Activated CD8-positive, alpha-beta T cell treated with anti-CD3 and anti-CD28 coated beads for 36 hours (primary cell): ENCODE measurements at regions of chr1 and their contacts with region 1.

Region 1: DNA sequence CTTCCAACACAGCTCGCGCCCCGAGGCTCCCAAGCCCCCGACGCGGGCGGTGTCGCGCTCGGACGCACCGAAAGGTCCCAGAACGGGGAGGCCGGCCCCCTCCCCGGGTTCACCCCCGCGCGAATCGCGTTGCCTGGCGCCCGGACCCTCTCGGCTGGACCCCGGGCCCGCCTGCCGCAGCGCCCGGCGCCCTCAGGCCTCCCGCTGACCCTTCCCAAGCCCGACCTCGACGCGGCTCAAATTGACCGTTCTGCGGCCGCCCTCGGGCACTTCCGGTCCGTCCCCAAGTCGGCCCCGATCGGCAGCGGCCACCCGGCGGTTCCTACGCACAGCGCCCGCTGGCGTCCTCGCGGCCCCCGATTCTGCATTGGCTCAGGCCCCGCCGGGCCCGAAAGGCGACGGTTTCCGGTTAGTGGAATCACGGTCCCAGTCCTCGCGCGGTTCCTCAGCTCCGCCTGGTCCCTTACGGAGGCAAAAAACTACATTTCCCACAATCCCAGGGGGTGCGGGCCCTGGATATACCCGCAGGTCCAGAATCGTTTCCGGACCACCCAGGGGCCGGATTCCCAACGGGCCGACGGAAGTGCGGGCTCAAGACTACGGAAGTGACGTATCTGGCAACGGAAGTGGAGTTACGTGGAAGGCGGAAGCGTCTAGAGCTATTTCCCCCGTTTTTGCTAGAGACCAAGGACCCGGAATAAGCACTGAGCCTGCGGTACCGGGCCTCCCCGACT is at the start of gene AURKAIP1:
- DNase-seq: peak; percentile 99
- ATAC-seq: peak; percentile 91
- H3K4me3 Mint-ChIP-seq: peak within 1 kb of the TSS; percentile 86
- H3K27ac Mint-ChIP-seq: peak within 1 kb of the TSS; percentile 96
- H3K4me1 Mint-ChIP-seq: peaks cover 31% of the 10 kb centered on the region
- H3K27me3 Mint-ChIP-seq: no peaks in the 10 kb centered on the region
- CTCF ChIP-seq: no peak
- total RNA-seq, gene AURKAIP1: 127 TPM

Region 2: GRCh38 chr1:1206376-1207260 is 168.5 kb before region 1 on chr1 and contains the start of gene TNFRSF18:
- CTCF ChIA-PET with region 1: no interaction called
- POLR2A ChIA-PET with region 1: no interaction called
- intact Hi-C with region 1: no loop called
- DNase-seq: peak; percentile 70
- ATAC-seq: peak; percentile 11
- H3K4me3 Mint-ChIP-seq: peak within 1 kb of the TSS; percentile 79
- H3K27ac Mint-ChIP-seq: peak within 1 kb of the TSS; percentile 98
- H3K4me1 Mint-ChIP-seq: peaks cover 31% of the 10 kb centered on the region
- H3K27me3 Mint-ChIP-seq: no peaks in the 10 kb centered on the region
- CTCF ChIP-seq: no peak
- total RNA-seq, gene TNFRSF18: 126 to 135 TPM

Region 3: DNA sequence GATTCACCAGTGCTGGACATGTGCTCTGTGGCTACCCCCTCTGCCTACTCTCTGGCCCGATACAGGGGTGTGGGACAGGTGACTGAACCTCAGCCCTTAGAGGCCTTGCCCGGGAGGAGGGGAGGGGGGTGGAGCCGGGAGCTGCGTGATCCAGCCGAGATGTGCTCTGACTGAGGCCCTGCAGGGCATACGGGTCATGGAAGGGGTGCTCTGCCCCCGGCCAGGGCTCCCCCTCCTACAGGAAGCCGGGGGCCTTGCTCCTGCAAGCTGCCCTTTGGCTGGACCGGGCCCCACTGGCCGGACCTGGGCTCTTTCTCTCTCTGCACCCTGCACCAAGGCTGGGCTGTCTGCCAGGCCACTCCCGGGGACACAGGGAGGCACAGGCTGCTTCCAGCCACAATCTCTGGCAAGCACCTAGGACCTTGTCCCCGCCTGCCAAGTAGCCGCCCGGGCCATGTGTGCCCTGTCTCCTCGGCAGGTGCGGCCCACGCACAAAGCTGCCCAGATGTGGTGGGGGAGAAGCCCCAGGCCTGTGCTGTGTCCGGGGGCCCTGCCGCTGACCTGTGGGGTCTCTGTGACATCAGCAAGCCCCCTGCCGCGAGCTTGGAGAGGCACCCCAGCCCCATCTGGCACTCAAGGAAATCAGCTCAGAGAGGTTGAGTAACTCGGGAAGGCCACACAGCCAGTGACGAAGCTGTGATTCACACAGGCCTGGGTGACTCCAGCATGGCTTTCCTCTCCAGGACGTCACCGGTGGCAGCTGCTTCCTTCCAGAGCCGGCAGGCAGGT is 93.4 kb before region 1 on chr1:
- CTCF ChIA-PET with region 1: no interaction called
- POLR2A ChIA-PET with region 1: no interaction called
- intact Hi-C with region 1: no loop called
- DNase-seq: peak; percentile 40
- ATAC-seq: peak; percentile 52
- H3K4me3 Mint-ChIP-seq: no peak overlapping the region
- H3K27ac Mint-ChIP-seq: no peak overlapping the region
- H3K4me1 Mint-ChIP-seq: peaks cover 2% of the 10 kb centered on the region
- H3K27me3 Mint-ChIP-seq: no peaks in the 10 kb centered on the region
- CTCF ChIP-seq: no peak

Region 4: GRCh38 chr1:1344672-1345361 is 30.3 kb before region 1 on chr1:
- CTCF ChIA-PET with region 1: interaction called, 17 read pairs
- POLR2A ChIA-PET with region 1: interaction called, 5 read pairs
- intact Hi-C with region 1: no loop called
- DNase-seq: peak; percentile 73
- ATAC-seq: peak; percentile 50
- H3K4me3 Mint-ChIP-seq: no peak overlapping the region
- H3K27ac Mint-ChIP-seq: no peak overlapping the region
- H3K4me1 Mint-ChIP-seq: peaks cover 22% of the 10 kb centered on the region
- H3K27me3 Mint-ChIP-seq: no peaks in the 10 kb centered on the region
- CTCF ChIP-seq: no peak

Region 5: GRCh38 chr1:1351511-1352427 is 23.3 kb before region 1 on chr1:
- CTCF ChIA-PET with region 1: interaction called, 40 read pairs
- POLR2A ChIA-PET with region 1: interaction called, 6 read pairs
- intact Hi-C with region 1: no loop called
- DNase-seq: no peak
- ATAC-seq: no peak
- H3K4me3 Mint-ChIP-seq: peak overlapping the region; percentile 61
- H3K27ac Mint-ChIP-seq: peak overlapping the region; percentile 49
- H3K4me1 Mint-ChIP-seq: peaks cover 22% of the 10 kb centered on the region
- H3K27me3 Mint-ChIP-seq: peaks cover 12% of the 10 kb centered on the region
- CTCF ChIP-seq: no peak

Region 6: DNA sequence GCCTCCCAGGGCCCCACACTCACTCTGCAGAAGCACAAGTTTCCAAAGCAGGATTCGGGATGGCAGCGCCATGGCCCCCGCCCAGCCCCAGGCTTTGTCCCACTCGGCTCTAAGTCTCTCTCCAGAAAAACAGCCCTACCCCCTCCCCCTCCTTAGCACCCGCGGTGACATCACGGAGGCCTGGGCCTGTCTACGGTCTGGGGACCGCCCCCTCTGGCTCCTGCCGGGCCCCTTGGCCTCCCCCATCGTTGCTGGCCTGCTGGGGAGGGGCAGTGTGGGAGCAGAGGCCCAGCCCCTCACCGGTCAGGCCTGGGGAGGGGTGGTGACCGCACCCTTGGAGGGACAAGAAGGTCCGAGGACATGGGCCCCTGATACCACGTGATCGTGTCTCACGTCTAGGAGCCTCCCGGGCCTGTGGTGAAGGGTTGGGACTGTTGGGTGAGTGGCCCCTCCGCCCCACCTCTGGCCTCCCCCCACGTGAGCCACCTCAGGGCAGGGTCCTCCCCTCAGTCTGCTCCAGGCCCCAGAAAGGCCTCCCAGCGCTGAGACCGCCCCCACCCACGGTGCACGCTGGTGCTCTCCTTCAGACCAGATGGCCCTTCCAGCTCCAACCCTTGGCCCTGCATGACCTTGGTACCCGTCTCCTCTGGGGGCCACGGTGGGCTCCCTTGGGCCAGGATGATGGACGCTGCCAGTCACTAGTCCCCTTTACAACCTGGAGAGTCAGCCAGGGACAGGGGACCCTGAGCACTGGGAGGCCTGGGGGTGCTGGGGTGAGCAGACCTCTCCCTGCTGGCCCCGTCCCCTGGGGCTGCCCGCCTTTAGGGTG is 16.4 kb before region 1 on chr1 and contains the start of gene MXRA8:
- CTCF ChIA-PET with region 1: interaction called, 40 read pairs
- POLR2A ChIA-PET with region 1: interaction called, 10 read pairs
- intact Hi-C with region 1: no loop called
- DNase-seq: peak; percentile 62
- ATAC-seq: peak; percentile 60
- H3K4me3 Mint-ChIP-seq: no peak within 1 kb of the TSS
- H3K27ac Mint-ChIP-seq: no peak within 1 kb of the TSS
- H3K4me1 Mint-ChIP-seq: peaks cover 19% of the 10 kb centered on the region
- H3K27me3 Mint-ChIP-seq: peaks cover 3% of the 10 kb centered on the region
- CTCF ChIP-seq: no peak
- total RNA-seq, gene MXRA8: 0.92 to 0.98 TPM

Region 7: GRCh38 chr1:1399187-1399871 is 24.2 kb after region 1 on chr1 and contains the start of gene CCNL2:
- CTCF ChIA-PET with region 1: interaction called, 12 read pairs
- POLR2A ChIA-PET with region 1: interaction called, 24 read pairs
- intact Hi-C with region 1: no loop called
- DNase-seq: peak; percentile 99
- ATAC-seq: peak; percentile 97
- H3K4me3 Mint-ChIP-seq: peak within 1 kb of the TSS; percentile 93
- H3K27ac Mint-ChIP-seq: peak within 1 kb of the TSS; percentile 90
- H3K4me1 Mint-ChIP-seq: peaks cover 48% of the 10 kb centered on the region
- H3K27me3 Mint-ChIP-seq: no peaks in the 10 kb centered on the region
- CTCF ChIP-seq: peak; percentile 54
- total RNA-seq, gene CCNL2: 86.3 to 92.4 TPM

Region 8: GRCh38 chr1:1406817-1407635 is 31.9 kb after region 1 on chr1 and contains the start of gene MRPL20:
- CTCF ChIA-PET with region 1: interaction called, 7 read pairs
- POLR2A ChIA-PET with region 1: interaction called, 11 read pairs
- intact Hi-C with region 1: no loop called
- DNase-seq: peak; percentile 97
- ATAC-seq: peak; percentile 97
- H3K4me3 Mint-ChIP-seq: peak within 1 kb of the TSS; percentile 96
- H3K27ac Mint-ChIP-seq: peak within 1 kb of the TSS; percentile 91
- H3K4me1 Mint-ChIP-seq: peaks cover 41% of the 10 kb centered on the region
- H3K27me3 Mint-ChIP-seq: no peaks in the 10 kb centered on the region
- CTCF ChIP-seq: no peak
- total RNA-seq, gene MRPL20: 127 to 129 TPM

Region 9: GRCh38 chr1:1510912-1511532 is 135.9 kb after region 1 on chr1:
- CTCF ChIA-PET with region 1: interaction called, 10 read pairs
- POLR2A ChIA-PET with region 1: no interaction called
- intact Hi-C with region 1: no loop called
- DNase-seq: peak; percentile 42
- ATAC-seq: no peak
- H3K4me3 Mint-ChIP-seq: peak overlapping the region; percentile 91
- H3K27ac Mint-ChIP-seq: peak overlapping the region; percentile 92
- H3K4me1 Mint-ChIP-seq: peaks cover 10% of the 10 kb centered on the region
- H3K27me3 Mint-ChIP-seq: no peaks in the 10 kb centered on the region
- CTCF ChIP-seq: no peak